ENCODE measurements at regions of chr1 and their contacts with region 1.

Region 1: GRCh38 chr1:11735854-11736745 is at the start of gene AGTRAP:
- DNase-seq: peak; percentile 97 to 98 (median 98)
- ATAC-seq: peak; percentile 85 to 94 (median 87)
- H3K4me3 ChIP-seq: peak within 1 kb of the TSS; percentile 67 to 98 (median 84)
- H3K27ac ChIP-seq: peak within 1 kb of the TSS; percentile 39 to 96 (median 84)
- H3K4me1 ChIP-seq: peaks cover 5 to 76% (median 28%) of the 10 kb centered on the region in 12 donors
- H3K27me3 ChIP-seq: no peaks in the 10 kb centered on the region
- CTCF ChIP-seq: no peak
- POLR2A ChIP-seq: peak in 1 of 2 donors; percentile 65
- total RNA-seq, gene AGTRAP: 11.8 to 36.7 (median 24.5) TPM

Region 2: DNA sequence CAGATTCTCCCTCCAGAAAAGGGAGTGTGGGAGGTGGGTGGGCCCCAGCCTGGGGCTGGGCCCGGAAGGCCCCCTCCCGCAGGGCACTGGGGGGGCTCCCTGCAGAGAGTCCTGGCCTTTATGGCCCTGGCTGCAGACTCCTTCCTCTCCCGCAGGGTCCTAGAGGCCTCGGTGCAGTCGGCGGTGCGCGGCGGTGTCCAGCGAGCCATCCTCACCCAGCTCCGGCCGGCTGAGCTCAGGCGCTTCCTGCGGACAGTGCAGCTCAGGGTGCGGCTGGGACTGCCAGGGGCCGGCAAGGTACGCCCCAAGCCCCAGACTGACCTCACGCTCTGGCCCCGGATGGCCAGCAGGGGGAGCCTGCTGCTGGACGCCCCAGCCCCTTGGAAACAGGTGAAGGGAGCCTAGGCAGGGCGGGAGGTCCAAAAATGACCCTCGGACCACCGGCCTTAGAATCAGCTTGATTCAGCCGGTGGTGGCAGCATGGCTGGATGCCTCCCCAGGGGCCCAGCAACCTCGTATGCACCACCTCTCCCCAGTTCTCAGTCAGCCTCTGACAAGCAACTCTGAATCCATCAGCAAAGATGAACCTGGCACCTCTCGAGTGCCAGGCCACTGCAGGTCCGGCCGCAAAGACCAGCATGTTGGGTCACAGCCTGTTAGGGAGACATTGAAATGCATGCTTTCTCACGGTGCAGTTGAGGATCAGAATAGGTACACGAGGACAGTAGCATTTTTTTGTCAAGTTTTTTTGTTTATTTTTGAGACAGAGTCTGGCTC is 49.1 kb after region 1 on chr1:
- intact Hi-C with region 1: loop called in 2 of 10 experiments (anchors 5 to 10 kb)
- DNase-seq: peak; percentile 81 to 90 (median 83)
- ATAC-seq: peak; percentile 26 to 60 (median 57)
- H3K4me3 ChIP-seq: peak overlapping the region in 10 of 12 donors; percentile 13 to 53 (median 42)
- H3K27ac ChIP-seq: peak overlapping the region in 11 of 12 donors; percentile 46 to 99 (median 71)
- H3K4me1 ChIP-seq: peaks cover 26 to 59% (median 57%) of the 10 kb centered on the region in 12 donors
- H3K27me3 ChIP-seq: no peaks in the 10 kb centered on the region
- CTCF ChIP-seq: peak; percentile 83 to 98 (median 89)
- POLR2A ChIP-seq: peak in 1 of 2 donors; percentile 37